Left cardiac atrium (tissue), 4 donors: ENCODE measurements at regions of chr11 and their contacts with region 1.

Region 1: DNA sequence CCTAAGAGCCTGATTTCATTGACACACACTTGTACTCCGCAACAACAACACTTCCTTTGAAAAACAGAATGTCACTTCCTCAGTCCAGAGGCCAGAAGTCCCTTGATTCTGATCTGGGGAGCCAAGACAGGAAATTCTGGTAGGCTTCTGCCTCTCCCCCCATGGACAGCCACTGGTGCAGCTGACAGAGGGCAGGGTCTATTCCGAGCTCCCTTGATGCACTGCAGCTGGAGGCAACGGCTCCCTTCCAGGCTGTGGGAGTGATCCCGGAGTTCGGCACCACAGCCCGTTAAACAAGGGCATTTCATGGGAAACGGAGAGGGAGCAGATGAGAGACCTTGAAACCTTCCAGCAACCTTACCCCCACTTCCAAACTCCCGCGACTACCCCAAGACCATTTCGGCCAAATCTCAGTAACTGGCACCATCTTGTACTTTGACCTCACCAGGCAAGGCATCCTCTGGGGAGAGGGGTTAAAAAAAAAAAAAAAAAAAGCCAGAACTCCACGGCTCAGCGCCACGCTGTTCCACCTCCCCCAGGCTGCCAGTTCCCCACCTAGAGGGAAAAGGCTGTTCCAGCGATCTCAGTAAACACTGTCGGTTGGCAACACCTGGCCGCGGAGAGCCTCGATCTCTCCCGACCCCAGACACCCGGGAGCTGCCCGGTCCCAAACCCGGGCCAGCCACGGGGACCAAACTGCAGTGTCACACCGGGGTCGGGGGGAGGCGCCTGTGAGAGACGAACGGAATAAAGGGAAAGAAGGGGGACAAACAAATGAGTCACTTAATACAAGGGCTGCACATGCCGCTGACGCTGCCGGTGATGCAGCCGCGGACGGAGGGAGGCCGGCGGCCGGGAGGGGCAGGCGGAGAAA is 1.1 kb downstream of the GAB2 start:
- DNase-seq: peak; percentile 89
- ATAC-seq: peak; percentile 58 to 64

Region 2: GRCh38 chr11:78139422-78140391 is 276.8 kb before region 1 on chr11 and contains the start of gene ALG8:
- intact Hi-C with region 1: loop called in 1 of 2 experiments (anchors 10 kb)
- DNase-seq: peak; percentile 97
- ATAC-seq: peak; percentile 99 to 100
- total RNA-seq, gene ALG8: 21.1 to 25.2 TPM

Region 3: DNA sequence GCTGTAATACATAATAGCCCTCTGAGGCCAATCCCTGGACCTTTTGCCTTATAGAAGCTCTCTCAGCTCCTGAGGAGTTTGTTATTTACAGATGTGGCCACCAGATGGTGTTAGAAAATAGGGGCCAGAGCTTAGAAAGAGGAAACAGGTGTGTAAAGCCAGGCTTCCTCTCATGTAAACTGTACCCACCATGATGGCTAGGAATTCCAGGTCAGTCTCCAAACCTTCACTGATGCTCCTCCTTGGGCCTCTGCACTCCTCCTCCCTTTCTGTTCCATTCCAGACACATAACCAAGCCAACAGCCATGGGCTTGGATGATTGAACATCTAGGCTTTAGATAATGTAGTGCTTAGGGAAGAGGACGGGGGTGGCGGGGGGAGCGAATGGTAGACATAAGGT is 188.1 kb before region 1 on chr11:
- intact Hi-C with region 1: loop called (anchors 5 kb)
- DNase-seq: no peak
- ATAC-seq: peak; percentile 50 to 60

Region 4: DNA sequence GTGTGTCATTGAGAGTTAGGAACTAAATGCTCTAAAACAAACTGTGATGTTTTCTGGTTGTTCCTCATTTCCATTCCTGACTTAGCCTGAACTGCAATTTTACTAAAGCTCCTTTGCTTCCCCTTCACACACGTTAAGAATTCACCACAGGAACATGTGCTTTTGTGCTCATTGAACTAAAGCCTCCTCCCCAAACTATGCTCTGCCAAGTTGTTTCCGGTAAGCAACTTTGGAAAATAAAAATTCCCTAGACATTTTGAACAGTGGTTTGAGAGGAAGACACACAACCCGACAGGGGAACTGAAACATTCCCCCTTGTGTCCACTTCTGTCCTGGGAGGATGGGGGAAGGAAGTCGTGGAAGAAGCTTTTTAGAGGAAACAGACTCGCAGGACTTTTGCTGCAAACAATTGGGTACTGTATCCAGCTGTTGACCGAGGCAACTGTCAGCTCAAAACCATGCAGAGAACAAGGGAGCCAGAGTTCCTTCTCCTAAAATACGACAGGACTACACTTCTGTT is 65.8 kb before region 1 on chr11:
- intact Hi-C with region 1: loop called in 1 of 2 experiments (anchors 10 kb)
- DNase-seq: no peak
- ATAC-seq: peak; percentile 70 to 75

Region 5: DNA sequence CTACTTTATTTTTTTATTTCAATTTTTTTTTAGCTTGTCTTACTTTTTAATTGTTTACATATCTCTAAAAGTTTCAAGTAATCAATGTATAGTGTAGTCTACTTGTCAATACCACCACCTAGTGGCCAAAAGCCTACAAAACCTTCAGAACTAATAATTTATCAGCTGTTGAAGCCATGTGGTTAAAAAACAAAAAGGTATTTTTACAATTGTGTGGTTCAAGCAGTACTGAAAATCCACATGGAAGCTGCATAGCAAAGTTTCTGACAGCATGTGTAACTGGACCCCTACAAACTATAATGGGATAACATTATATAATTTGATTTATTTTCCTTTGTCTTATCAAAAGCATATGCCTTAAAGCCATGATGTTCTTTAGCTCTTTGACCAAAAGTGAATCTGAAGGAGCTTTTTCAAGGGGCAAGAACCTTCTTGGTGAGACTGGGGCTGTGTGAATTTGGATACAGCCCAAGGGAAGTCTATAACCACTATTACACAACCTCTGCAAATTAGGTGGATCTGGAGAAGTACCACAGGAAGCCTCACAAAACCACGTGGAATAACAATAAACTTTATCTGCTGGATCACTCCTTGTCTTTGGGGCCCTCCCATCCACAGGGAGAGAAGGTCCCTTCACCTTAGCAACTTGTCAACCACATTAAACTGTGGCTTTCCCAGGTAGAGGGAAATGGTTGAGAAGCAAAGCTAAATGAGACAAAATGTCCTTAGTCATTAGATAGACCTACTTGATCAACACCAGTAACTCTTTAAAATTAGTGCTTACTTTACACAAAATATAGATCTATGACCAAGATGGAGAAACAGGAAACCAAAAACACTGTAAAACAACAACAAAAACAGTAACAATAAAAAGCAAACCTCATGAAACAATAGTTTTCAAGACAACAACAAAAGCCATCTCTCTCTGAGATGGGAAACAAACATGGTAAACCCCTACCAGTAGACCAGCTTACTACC is 148.2 kb after region 1 on chr11:
- intact Hi-C with region 1: loop called (anchors 5 kb)
- DNase-seq: no peak
- ATAC-seq: peak; percentile 55 to 58